Posterior cingulate gyrus (tissue), 11 donors: ENCODE measurements at regions of chr1 and their contacts with region 1.

Region 1: GRCh38 chr1:111911776-111912525 is 77.5 kb downstream of the KCND3 start:
- DNase-seq: no peak

Region 2: DNA sequence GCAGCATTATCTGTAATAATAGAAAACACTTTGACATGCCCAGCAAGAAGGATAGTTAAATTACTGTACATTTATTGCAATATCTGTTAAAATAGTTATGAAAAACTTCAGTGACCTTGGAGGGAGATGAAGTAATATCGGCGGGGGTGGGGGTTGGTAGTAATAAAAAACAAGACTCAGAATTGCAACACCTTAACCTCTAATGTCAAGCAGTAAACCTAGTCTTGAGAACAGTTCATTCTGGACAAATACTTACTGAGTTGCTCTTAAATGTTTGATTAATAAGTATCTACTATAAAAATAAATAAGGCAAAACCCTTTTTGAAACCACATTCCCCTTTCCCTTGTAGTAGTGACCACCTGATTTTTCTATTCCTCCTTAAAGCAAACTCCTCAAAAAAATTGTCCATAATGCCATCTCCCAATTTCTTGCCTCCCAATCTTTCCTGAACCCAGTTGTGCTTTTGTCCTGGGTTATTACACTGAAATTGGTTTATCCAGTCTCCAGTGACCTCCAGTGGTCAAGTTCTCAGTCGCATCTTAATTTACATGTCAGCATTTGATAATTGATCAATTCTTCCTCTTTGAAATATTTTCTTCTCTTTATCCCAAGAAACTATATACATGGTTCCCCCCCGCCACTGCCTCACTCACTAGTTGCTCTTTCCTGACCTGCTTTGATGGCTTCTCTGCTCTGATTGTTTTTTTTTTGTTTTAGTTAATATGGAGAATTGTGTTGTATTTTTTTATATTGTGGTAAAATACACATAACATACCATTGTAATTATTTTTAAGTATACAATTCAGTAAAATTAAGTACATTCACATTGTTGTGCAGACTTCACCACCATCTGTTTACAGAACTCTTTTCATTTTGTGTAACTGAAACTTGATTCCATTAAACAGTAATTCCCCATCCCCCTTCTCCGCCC is 255.6 kb before region 1 on chr1:
- intact Hi-C with region 1: no loop called
- DNase-seq: peak in 1 of 10 donors; percentile 40

Region 3: GRCh38 chr1:111813521-111814304 is 98.2 kb before region 1 on chr1:
- intact Hi-C with region 1: no loop called
- DNase-seq: no peak

Region 4: DNA sequence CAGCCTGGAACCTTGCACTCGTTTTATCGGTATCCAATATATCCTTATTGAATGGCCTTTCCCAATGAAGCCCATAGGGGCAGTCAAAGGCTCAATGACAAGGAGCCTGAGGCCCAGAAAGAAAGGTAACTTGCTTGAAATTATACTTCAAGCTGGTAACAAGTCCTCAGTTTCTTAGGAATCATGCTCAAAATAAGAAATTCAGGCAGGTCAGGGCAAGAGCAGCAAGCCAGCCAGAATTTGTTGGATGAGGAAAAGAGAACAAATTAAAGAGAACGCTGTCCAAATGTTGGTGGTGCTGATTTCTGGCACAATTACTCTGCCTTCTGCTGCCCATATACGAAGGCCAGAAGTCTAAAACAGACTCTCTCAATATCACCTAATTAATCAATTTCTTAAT is 78.6 kb before region 1 on chr1:
- intact Hi-C with region 1: no loop called
- DNase-seq: no peak

Region 5: GRCh38 chr1:111856411-111857185 is 55.4 kb before region 1 on chr1:
- intact Hi-C with region 1: loop called (anchors 10 kb)
- DNase-seq: no peak